HepG2 (cell line): ENCODE measurements at regions of chrX and their contacts with region 1.

Region 1: GRCh38 chrX:51759055-51759839 is 16.0 kb downstream of the GSPT2 start:
- DNase-seq: no peak
- ATAC-seq: no peak
- H3K4me3 ChIP-seq: no peak overlapping the region
- H3K27ac ChIP-seq: no peak overlapping the region
- H3K4me1 ChIP-seq: no peaks in the 10 kb centered on the region
- H3K27me3 ChIP-seq: no peaks in the 10 kb centered on the region
- CTCF ChIP-seq: no peak
- EP300 ChIP-seq: no peak
- POLR2A ChIP-seq: no peak
- RAD21 ChIP-seq: no peak

Region 2: GRCh38 chrX:51376672-51377071 is 382.6 kb before region 1 on chrX:
- CTCF ChIA-PET with region 1: no interaction called
- POLR2A ChIA-PET with region 1: no interaction called
- in situ Hi-C with region 1: no loop called
- intact Hi-C with region 1: no loop called
- DNase-seq: no peak
- ATAC-seq: no peak
- H3K4me3 ChIP-seq: no peak overlapping the region
- H3K27ac ChIP-seq: no peak overlapping the region
- H3K4me1 ChIP-seq: no peaks in the 10 kb centered on the region
- H3K27me3 ChIP-seq: no peaks in the 10 kb centered on the region
- CTCF ChIP-seq: no peak
- EP300 ChIP-seq: no peak
- POLR2A ChIP-seq: no peak
- RAD21 ChIP-seq: no peak

Region 3: GRCh38 chrX:51779306-51779705 is 20.1 kb after region 1 on chrX:
- CTCF ChIA-PET with region 1: no interaction called
- POLR2A ChIA-PET with region 1: no interaction called
- in situ Hi-C with region 1: no loop called
- intact Hi-C with region 1: loop called (anchors 2 kb)
- DNase-seq: no peak
- ATAC-seq: no peak
- H3K4me3 ChIP-seq: no peak overlapping the region
- H3K27ac ChIP-seq: no peak overlapping the region
- H3K4me1 ChIP-seq: no peaks in the 10 kb centered on the region
- H3K27me3 ChIP-seq: no peaks in the 10 kb centered on the region
- CTCF ChIP-seq: no peak
- EP300 ChIP-seq: no peak
- POLR2A ChIP-seq: no peak
- RAD21 ChIP-seq: no peak